ENCODE measurements at regions of chr5 and their contacts with region 1.

Region 1: GRCh38 chr5:146548781-146549449 is 32.9 kb upstream of the GPR151 start:
- DNase-seq: no peak
- H3K4me3 Mint-ChIP-seq: no peak overlapping the region
- H3K27ac Mint-ChIP-seq: no peak overlapping the region
- H3K4me1 Mint-ChIP-seq: no peaks in the 10 kb centered on the region
- H3K27me3 Mint-ChIP-seq: peaks cover 69% of the 10 kb centered on the region
- CTCF ChIP-seq: no peak

Region 2: GRCh38 chr5:148063861-148064260 is 1514.9 kb after region 1 on chr5 and contains the start of gene SPINK5:
- CTCF ChIA-PET with region 1: no interaction called
- POLR2A ChIA-PET with region 1: no interaction called
- intact Hi-C with region 1: loop called (anchors 10 kb)
- DNase-seq: peak; percentile 88
- H3K4me3 Mint-ChIP-seq: no peak within 1 kb of the TSS
- H3K27ac Mint-ChIP-seq: no peak within 1 kb of the TSS
- H3K4me1 Mint-ChIP-seq: no peaks in the 10 kb centered on the region
- H3K27me3 Mint-ChIP-seq: no peaks in the 10 kb centered on the region
- CTCF ChIP-seq: no peak
- total RNA-seq, gene SPINK5: 0.96 and 3.1 TPM in 2 replicates